ENCODE measurements at regions of chr5 and their contacts with region 1.

Region 1: DNA sequence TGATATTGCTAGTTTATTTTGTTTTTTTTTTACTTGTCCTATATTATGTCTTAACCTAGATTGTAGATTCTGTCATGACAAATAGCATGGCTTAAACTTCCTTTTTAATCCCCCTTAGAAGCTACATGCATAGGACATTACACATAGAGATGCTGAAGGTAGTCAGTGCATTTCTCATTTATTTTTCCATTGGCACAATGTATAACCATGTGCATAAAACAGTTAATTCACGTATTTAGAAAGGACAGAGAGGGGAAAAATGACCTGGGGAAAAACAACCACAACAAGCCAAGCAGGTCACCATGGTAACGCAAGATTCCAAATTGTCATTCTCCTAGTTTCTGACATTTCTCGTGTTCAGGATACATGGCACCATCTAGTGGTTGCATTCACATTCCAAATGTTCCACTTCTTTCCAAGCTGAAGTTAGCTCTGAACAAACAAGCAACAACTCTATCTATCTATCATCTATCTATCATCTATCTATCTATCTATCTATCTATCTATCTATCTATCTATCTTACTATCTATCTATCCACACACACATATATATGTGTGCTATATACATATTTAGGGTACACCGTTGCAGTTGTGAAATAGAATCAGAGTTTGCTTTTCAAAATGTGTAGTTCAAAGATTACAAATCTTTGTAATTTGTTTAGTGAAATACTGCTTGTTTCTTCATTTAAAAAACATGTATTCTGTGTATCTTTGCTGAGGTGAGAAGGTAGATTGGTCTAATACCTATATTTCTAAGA is 487.2 kb upstream of the ST8SIA4 start:
- DNase-seq: peak; percentile 24
- ATAC-seq: no peak
- H3K4me3 ChIP-seq: no peak overlapping the region
- H3K4me3 Mint-ChIP-seq: no peak overlapping the region
- H3K27ac ChIP-seq: no peak overlapping the region
- H3K27ac Mint-ChIP-seq: no peak overlapping the region
- H3K4me1 ChIP-seq: no peaks in the 10 kb centered on the region
- H3K4me1 Mint-ChIP-seq: no peaks in the 10 kb centered on the region
- H3K27me3 ChIP-seq: no peaks in the 10 kb centered on the region
- H3K27me3 Mint-ChIP-seq: no peaks in the 10 kb centered on the region
- CTCF ChIP-seq: peak; percentile 41

Region 2: GRCh38 chr5:100623719-100624118 is 766.6 kb before region 1 on chr5:
- CTCF ChIA-PET with region 1: interaction called, 10 read pairs
- POLR2A ChIA-PET with region 1: no interaction called
- intact Hi-C with region 1: loop called (anchors 1 kb)
- DNase-seq: peak; percentile 47
- ATAC-seq: peak; percentile 45
- H3K4me3 ChIP-seq: no peak overlapping the region
- H3K4me3 Mint-ChIP-seq: no peak overlapping the region
- H3K27ac ChIP-seq: no peak overlapping the region
- H3K27ac Mint-ChIP-seq: no peak overlapping the region
- H3K4me1 ChIP-seq: no peaks in the 10 kb centered on the region
- H3K4me1 Mint-ChIP-seq: no peaks in the 10 kb centered on the region
- H3K27me3 ChIP-seq: no peaks in the 10 kb centered on the region
- H3K27me3 Mint-ChIP-seq: peaks cover 3% of the 10 kb centered on the region
- CTCF ChIP-seq: peak; percentile 78

Region 3: DNA sequence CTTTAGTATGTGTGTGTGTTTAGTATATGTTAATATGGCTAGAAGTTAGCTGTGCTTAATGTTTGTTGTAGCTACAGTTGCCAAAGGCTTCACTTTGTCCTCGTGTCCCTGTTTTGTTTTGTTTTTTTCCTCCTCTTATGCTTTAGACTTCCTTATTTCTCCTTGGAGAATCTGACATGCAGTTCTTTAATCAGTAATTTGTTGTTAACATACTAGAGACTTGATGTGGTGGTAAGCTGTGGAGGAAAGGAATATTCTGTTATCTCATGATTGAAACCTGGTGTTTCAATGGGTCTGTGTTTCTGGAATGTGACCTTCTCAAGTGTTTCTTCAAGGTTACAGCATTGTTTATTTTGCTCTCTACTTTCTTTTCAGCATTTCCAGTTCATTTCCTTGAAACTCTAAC is 28.4 kb after region 1 on chr5:
- CTCF ChIA-PET with region 1: no interaction called
- POLR2A ChIA-PET with region 1: no interaction called
- intact Hi-C with region 1: no loop called
- DNase-seq: no peak
- ATAC-seq: no peak
- H3K4me3 ChIP-seq: no peak overlapping the region
- H3K4me3 Mint-ChIP-seq: no peak overlapping the region
- H3K27ac ChIP-seq: no peak overlapping the region
- H3K27ac Mint-ChIP-seq: no peak overlapping the region
- H3K4me1 ChIP-seq: no peaks in the 10 kb centered on the region
- H3K4me1 Mint-ChIP-seq: no peaks in the 10 kb centered on the region
- H3K27me3 ChIP-seq: no peaks in the 10 kb centered on the region
- H3K27me3 Mint-ChIP-seq: no peaks in the 10 kb centered on the region
- CTCF ChIP-seq: no peak